AG04450 (cell line): ENCODE measurements at regions of chr22 and their contacts with region 1.

Region 1: DNA sequence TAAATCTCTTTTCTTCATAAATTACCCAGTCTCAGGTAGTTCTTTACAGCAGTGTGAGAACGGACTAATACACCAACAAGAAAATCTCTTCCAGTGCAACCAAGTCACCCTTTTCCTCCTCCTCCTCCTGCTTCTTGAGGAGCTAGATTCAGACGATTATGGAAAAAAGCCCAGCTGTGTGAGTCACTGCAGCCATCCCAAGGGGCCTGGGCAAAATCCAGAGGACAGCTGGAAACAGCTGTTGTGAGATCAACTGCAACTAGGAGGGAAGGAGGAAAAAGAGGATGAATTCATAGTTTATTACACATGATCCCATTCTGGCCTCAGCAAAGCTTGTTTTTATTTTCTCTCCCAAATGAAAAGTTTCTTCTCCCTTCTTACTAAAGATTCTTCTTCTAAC is 32.9 kb downstream of the RBFOX2 start:
- DNase-seq: peak; percentile 98
- H3K4me3 ChIP-seq: peak overlapping the region; percentile 35
- H3K27ac ChIP-seq: peak overlapping the region; percentile 85
- H3K27me3 ChIP-seq: no peaks in the 10 kb centered on the region
- CTCF ChIP-seq: no peak

Region 2: GRCh38 chr22:35971456-35972119 is 24.2 kb before region 1 on chr22:
- CTCF ChIA-PET with region 1: interaction called, 3 read pairs
- POLR2A ChIA-PET with region 1: interaction called, 25 read pairs
- DNase-seq: peak; percentile 80
- H3K4me3 ChIP-seq: peak overlapping the region; percentile 7; the same call in 1 of the 2 replicates
- H3K27ac ChIP-seq: peak overlapping the region; percentile 80
- H3K27me3 ChIP-seq: no peaks in the 10 kb centered on the region
- CTCF ChIP-seq: no peak

Region 3: GRCh38 chr22:36028646-36029405 is 33.1 kb after region 1 on chr22 and contains the start of gene RBFOX2:
- CTCF ChIA-PET with region 1: interaction called, 3 read pairs
- POLR2A ChIA-PET with region 1: interaction called, 13 read pairs
- DNase-seq: peak; percentile 94
- H3K4me3 ChIP-seq: peak within 1 kb of the TSS; percentile 91
- H3K27ac ChIP-seq: peak within 1 kb of the TSS; percentile 54
- H3K27me3 ChIP-seq: no peaks in the 10 kb centered on the region
- CTCF ChIP-seq: no peak
- polyA plus RNA-seq, gene RBFOX2: 253 and 288 TPM in 2 replicates